Heart left ventricle (tissue), 16 donors: ENCODE measurements at regions of chr1 and their contacts with region 1.

Region 1: DNA sequence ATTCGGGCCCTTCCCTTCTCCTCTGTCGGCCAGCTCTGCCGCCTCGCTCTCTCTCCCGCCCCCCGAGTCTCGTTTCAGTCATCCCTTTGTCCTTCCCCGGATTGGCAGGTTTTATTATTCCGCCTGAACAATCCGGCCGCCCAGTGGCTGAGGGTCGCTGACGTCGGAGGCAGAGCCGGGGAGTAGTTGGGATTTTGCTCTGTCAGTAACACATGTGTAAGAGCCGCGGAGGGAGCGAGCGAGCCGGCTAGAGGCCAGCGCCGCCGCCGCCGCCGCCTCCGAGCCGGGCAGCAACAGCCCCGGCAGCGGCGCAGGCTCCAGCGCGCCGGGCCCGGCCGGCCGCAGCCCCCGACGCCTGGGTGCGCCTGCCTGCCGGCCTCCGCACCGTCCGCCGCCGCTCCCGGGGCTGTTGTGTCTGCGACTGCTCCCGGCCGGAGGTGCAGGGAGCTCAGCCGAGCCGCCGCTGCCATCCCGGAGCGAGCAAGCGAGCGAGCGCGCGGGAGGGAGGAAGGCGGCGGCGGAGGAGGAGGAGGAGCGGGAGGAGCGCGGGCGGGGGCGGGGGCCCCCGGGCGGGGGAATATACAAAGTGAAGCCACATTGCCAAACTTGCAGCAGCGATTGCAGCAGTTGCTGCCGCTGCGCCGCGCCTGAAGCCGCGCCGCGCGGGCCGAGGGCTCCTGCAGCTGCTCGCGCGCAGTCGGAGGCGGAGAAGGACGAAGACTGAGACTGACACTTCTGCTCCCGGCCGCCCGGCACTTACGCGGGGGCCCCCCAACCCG is at the start of gene LMO4:
- DNase-seq: peak; percentile 96 to 98 (median 98)
- ATAC-seq: peak; percentile 90 to 95 (median 94)
- H3K4me3 ChIP-seq: peak within 1 kb of the TSS; percentile 71 to 88 (median 80)
- H3K27ac ChIP-seq: peak within 1 kb of the TSS; percentile 89 to 98 (median 94)
- H3K4me1 ChIP-seq: peaks cover 0 to 33% (median 16%) of the 10 kb centered on the region in 12 donors
- H3K27me3 ChIP-seq: no peaks in the 10 kb centered on the region
- CTCF ChIP-seq: no peak
- POLR2A ChIP-seq: peak; percentile 73 to 97
- total RNA-seq, gene LMO4: 23.3 to 60.7 (median 29.6) TPM

Region 2: DNA sequence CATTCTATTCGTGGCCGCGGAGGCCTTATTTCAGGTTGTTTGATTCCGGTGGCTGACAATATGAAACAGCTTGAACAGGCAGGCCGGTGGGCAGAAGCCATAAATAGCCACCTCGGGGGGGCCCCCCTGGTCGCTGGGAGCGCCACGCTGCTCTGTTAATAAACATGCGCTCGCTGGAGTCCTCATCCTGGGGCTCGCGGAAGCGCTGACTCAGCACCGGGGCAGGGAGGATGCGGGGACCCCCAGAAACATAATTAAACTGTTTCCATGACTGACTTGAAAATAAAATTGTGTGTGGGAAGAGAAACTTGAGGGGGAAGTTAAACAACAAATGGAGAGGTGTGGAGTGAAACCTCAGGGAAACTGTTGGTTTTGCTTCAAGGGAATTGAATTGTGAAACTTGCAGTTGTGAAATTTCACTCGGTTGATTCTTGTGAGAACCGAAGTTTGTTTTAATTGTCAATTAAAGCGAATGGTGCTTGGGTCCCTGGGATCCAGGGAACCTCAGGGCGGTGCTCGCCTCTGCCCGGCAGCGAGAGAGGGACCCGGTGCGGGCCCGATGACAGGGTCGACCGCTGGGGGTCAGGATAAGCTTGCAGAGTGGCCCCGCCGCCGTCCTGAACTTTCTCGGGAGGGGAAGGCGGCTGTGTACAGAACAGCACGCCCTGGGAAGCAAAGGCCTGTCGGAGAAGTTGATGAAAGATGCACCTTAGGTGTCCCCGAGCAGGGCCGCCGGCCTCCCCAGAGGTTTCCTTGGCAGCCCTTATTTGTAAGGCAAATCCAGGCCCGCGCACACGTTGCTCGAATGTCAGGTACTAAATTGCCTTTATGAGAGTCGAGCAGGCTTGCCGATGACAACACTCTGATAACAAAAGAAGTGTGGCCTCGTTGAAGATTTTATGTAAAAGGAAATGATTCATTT is 176.7 kb before region 1 on chr1:
- intact Hi-C with region 1: loop called in 3 of 10 experiments (anchors 5 to 10 kb)
- DNase-seq: peak; percentile 76 to 86 (median 81)
- ATAC-seq: peak; percentile 89 to 95 (median 94)
- H3K4me3 ChIP-seq: peak overlapping the region in 10 of 12 donors; percentile 5 to 52 (median 38)
- H3K27ac ChIP-seq: peak overlapping the region in 10 of 12 donors; percentile 31 to 69 (median 41)
- H3K4me1 ChIP-seq: peaks cover 0 to 42% (median 11%) of the 10 kb centered on the region in 12 donors
- H3K27me3 ChIP-seq: no peaks in the 10 kb centered on the region
- CTCF ChIP-seq: peak; percentile 40 to 75 (median 62)
- POLR2A ChIP-seq: no peak

Region 3: DNA sequence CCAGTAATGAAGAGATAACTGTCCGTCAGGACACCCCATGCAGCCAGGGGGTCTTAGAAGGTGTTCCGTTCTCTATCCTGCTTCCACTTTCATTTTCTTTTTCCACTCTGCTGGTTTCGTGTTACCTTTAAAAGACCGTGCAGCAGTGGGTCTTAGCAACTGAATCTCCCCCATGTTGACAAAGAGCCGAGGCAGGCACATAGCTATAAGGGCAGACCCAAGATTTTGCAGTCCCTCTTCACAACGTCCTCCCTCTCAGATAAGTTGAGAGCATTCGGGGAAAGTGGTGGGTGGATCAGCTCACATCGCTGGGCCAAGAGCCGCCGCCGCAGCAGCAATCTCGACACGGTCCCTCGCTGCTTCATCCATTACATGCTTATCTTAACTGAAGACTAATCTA is 355.7 kb after region 1 on chr1:
- intact Hi-C with region 1: loop called in 3 of 10 experiments (anchors 5 to 10 kb)
- DNase-seq: peak in 3 of 5 donors; percentile 22 to 26 (median 25)
- ATAC-seq: peak; percentile 20 to 65 (median 62)
- H3K4me3 ChIP-seq: peak overlapping the region in 11 of 12 donors; percentile 18 to 58 (median 54)
- H3K27ac ChIP-seq: peak overlapping the region; percentile 16 to 73 (median 42)
- H3K4me1 ChIP-seq: peaks cover 0 to 16% (median 5%) of the 10 kb centered on the region in 12 donors
- H3K27me3 ChIP-seq: no peaks in the 10 kb centered on the region
- CTCF ChIP-seq: no peak
- POLR2A ChIP-seq: no peak

Region 4: GRCh38 chr1:87953732-87954344 is 625.4 kb after region 1 on chr1:
- intact Hi-C with region 1: loop called (anchors 1 to 5 kb)
- DNase-seq: peak in 4 of 5 donors; percentile 56 to 59 (median 58)
- ATAC-seq: peak in 3 of 4 donors; percentile 69 to 83 (median 76)
- H3K4me3 ChIP-seq: no peak overlapping the region
- H3K27ac ChIP-seq: no peak overlapping the region
- H3K4me1 ChIP-seq: peaks cover 0 to 19% (median 0%) of the 10 kb centered on the region in 12 donors
- H3K27me3 ChIP-seq: no peaks in the 10 kb centered on the region
- CTCF ChIP-seq: peak; percentile 51 to 89 (median 77)
- POLR2A ChIP-seq: no peak

Region 5: GRCh38 chr1:88061492-88062177 is 733.2 kb after region 1 on chr1:
- intact Hi-C with region 1: loop called in 3 of 10 experiments (anchors 5 to 10 kb)
- DNase-seq: peak in 3 of 5 donors; percentile 12 to 54 (median 41)
- ATAC-seq: peak in 3 of 4 donors; percentile 45 to 89 (median 81)
- H3K4me3 ChIP-seq: no peak overlapping the region
- H3K27ac ChIP-seq: no peak overlapping the region
- H3K4me1 ChIP-seq: peaks cover 0 to 5% (median 0%) of the 10 kb centered on the region in 12 donors
- H3K27me3 ChIP-seq: no peaks in the 10 kb centered on the region
- CTCF ChIP-seq: peak; percentile 30 to 71 (median 53)
- POLR2A ChIP-seq: no peak